Caco-2 (cell line): ENCODE measurements at regions of chr1 and their contacts with region 1.

Region 1: DNA sequence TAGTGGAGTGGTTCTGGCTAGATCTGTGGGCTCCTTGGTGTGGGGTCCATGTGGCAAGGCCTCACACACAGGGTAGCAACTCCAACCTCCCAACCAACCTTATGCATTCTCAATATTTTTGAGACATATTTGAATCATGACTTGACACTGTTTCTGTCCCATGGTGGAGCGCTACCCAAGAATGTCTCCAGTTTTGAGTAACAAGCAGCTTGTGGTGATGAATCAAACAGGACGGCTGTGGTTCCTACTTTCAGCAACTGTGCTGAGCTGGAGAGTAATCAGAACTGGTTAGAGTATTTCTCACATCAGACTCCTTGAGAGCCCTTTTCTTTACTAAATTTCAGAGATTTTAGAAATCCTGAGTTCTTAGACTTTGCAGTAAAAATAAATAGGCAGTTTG is 3.1 kb downstream of the LCE3D start:
- DNase-seq: no peak
- H3K4me3 ChIP-seq: no peak overlapping the region
- H3K4me3 Mint-ChIP-seq: no peak overlapping the region
- H3K27ac Mint-ChIP-seq: no peak overlapping the region
- H3K4me1 ChIP-seq: no peaks in the 10 kb centered on the region
- H3K4me1 Mint-ChIP-seq: no peaks in the 10 kb centered on the region
- H3K27me3 ChIP-seq: no peaks in the 10 kb centered on the region
- H3K27me3 Mint-ChIP-seq: peaks cover 18% of the 10 kb centered on the region
- CTCF ChIP-seq: no peak

Region 2: GRCh38 chr1:152623203-152623844 is 46.2 kb after region 1 on chr1:
- CTCF ChIA-PET with region 1: no interaction called
- POLR2A ChIA-PET with region 1: no interaction called
- intact Hi-C with region 1: loop called (anchors 5 kb)
- DNase-seq: peak in 1 of 2 experiments; percentile 19
- H3K4me3 ChIP-seq: no peak overlapping the region
- H3K4me3 Mint-ChIP-seq: no peak overlapping the region
- H3K27ac Mint-ChIP-seq: no peak overlapping the region
- H3K4me1 ChIP-seq: no peaks in the 10 kb centered on the region
- H3K4me1 Mint-ChIP-seq: no peaks in the 10 kb centered on the region
- H3K27me3 ChIP-seq: no peaks in the 10 kb centered on the region; the same call in 1 of the 2 replicates
- H3K27me3 Mint-ChIP-seq: peaks cover 14% of the 10 kb centered on the region
- CTCF ChIP-seq: peak in 1 of 2 experiments; percentile 25